ENCODE measurements at regions of chr1 and their contacts with region 1.

Region 1: GRCh38 chr1:111214074-111214801 is 13.3 kb upstream of the CHI3L2 start:
- DNase-seq: peak; percentile 58
- H3K4me3 Mint-ChIP-seq: peak overlapping the region; percentile 75
- H3K27ac Mint-ChIP-seq: peak overlapping the region; percentile 99
- H3K4me1 Mint-ChIP-seq: peaks cover 82% of the 10 kb centered on the region
- H3K27me3 Mint-ChIP-seq: no peaks in the 10 kb centered on the region

Region 2: GRCh38 chr1:110630839-110631663 is 583.2 kb before region 1 on chr1:
- CTCF ChIA-PET with region 1: no interaction called
- intact Hi-C with region 1: loop called (anchors 2 kb)
- DNase-seq: peak; percentile 92
- H3K4me3 Mint-ChIP-seq: no peak overlapping the region
- H3K27ac Mint-ChIP-seq: no peak overlapping the region
- H3K4me1 Mint-ChIP-seq: peaks cover 54% of the 10 kb centered on the region
- H3K27me3 Mint-ChIP-seq: no peaks in the 10 kb centered on the region

Region 3: GRCh38 chr1:110963691-110964399 is 250.4 kb before region 1 on chr1 and contains the start of gene LRIF1:
- CTCF ChIA-PET with region 1: no interaction called
- intact Hi-C with region 1: loop called (anchors 1 kb)
- DNase-seq: peak; percentile 100
- H3K4me3 Mint-ChIP-seq: peak within 1 kb of the TSS; percentile 83
- H3K27ac Mint-ChIP-seq: peak within 1 kb of the TSS; percentile 96
- H3K4me1 Mint-ChIP-seq: peaks cover 34% of the 10 kb centered on the region
- H3K27me3 Mint-ChIP-seq: peaks cover 8% of the 10 kb centered on the region
- total RNA-seq, gene LRIF1: 12.0 to 12.3 TPM

Region 4: DNA sequence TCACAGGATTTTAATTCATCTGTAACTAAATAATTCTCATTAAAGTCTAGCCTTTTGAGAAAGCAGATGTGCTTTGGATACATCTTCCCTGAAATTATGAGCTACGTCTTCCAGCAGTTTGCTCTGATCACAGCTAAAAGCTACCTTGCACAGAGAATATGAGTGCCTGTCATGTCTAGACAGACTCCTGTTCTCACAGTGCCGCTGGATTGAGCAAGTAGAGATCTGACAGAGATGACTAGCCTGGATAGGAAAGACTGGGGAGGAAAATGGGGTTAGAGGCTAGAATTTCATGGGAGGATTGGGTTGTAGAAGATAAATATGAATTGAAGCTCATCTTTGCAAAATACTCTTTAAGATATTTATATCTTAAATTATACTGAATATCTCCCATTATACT is 50.1 kb before region 1 on chr1:
- CTCF ChIA-PET with region 1: no interaction called
- intact Hi-C with region 1: no loop called
- DNase-seq: no peak
- H3K4me3 Mint-ChIP-seq: no peak overlapping the region
- H3K27ac Mint-ChIP-seq: no peak overlapping the region
- H3K4me1 Mint-ChIP-seq: peaks cover 14% of the 10 kb centered on the region
- H3K27me3 Mint-ChIP-seq: no peaks in the 10 kb centered on the region

Region 5: DNA sequence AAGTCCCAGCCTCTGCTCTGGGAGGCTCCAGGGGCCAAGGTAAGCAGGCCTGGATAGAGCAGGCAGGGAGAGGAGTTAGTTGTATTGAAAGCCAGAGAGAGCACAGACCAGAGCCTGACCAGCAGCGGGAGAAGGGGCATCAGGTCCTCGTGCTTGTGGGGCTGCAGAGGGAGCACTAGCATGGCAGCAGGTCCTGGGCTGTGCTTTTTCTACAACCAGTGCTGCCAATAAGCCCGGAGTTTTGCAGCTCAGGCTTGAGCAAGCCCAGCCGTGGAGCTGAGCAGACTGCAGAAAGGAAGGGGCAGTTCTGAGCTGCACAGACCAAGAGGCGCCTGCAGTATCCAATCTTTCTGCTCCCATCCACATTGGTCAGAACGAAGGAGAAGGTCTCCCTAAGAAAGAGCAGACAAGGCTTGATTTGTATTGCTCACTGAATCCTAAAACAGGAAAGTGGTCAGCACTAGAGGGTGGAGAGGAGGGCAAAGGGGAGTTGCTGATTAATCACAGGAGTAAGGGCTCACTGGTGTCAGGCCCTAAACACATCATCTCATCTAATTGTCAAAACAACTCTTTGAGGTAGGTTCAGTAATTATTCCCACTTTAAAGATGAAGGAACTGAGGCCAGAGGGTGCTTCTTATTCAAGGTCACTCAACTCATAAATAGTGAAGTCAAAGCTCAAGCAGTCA is 16.5 kb before region 1 on chr1:
- CTCF ChIA-PET with region 1: interaction called, 234 read pairs
- intact Hi-C with region 1: loop called (anchors 1 kb)
- DNase-seq: peak; percentile 70
- H3K4me3 Mint-ChIP-seq: peak overlapping the region; percentile 98
- H3K27ac Mint-ChIP-seq: peak overlapping the region; percentile 99
- H3K4me1 Mint-ChIP-seq: peaks cover 71% of the 10 kb centered on the region
- H3K27me3 Mint-ChIP-seq: no peaks in the 10 kb centered on the region

Region 6: GRCh38 chr1:111227851-111228747 is 13.9 kb after region 1 on chr1:
- CTCF ChIA-PET with region 1: interaction called, 6 read pairs
- intact Hi-C with region 1: loop called (anchors 1 kb)
- DNase-seq: peak; percentile 29
- H3K4me3 Mint-ChIP-seq: no peak overlapping the region
- H3K27ac Mint-ChIP-seq: peak overlapping the region; percentile 82
- H3K4me1 Mint-ChIP-seq: peaks cover 80% of the 10 kb centered on the region
- H3K27me3 Mint-ChIP-seq: no peaks in the 10 kb centered on the region

Region 7: GRCh38 chr1:111448918-111449702 is 234.9 kb after region 1 on chr1 and contains the starts of genes ATP5PB and WDR77:
- CTCF ChIA-PET with region 1: no interaction called
- intact Hi-C with region 1: loop called (anchors 2 kb)
- DNase-seq: peak; percentile 96
- H3K4me3 Mint-ChIP-seq: peak within 1 kb of the TSS; percentile 100
- H3K27ac Mint-ChIP-seq: peak within 1 kb of the TSS; percentile 96
- H3K4me1 Mint-ChIP-seq: peaks cover 71% of the 10 kb centered on the region
- H3K27me3 Mint-ChIP-seq: no peaks in the 10 kb centered on the region
- total RNA-seq, gene ATP5PB: 324 to 331 TPM
- total RNA-seq, gene WDR77: 43.1 to 48.8 TPM

Region 8: GRCh38 chr1:111603979-111604378 is 389.7 kb after region 1 on chr1:
- CTCF ChIA-PET with region 1: no interaction called
- intact Hi-C with region 1: loop called (anchors 2 kb)
- DNase-seq: peak; percentile 90
- H3K4me3 Mint-ChIP-seq: peak overlapping the region; percentile 7
- H3K27ac Mint-ChIP-seq: peak overlapping the region; percentile 92
- H3K4me1 Mint-ChIP-seq: peaks cover 76% of the 10 kb centered on the region
- H3K27me3 Mint-ChIP-seq: no peaks in the 10 kb centered on the region